AG04450 (cell line): ENCODE measurements at regions of chr15 and their contacts with region 1.

Region 1: GRCh38 chr15:65869127-65869953 is at the start of gene RAB11A:
- DNase-seq: peak; percentile 93
- H3K4me3 ChIP-seq: peak within 1 kb of the TSS; percentile 99
- H3K27ac ChIP-seq: peak within 1 kb of the TSS; percentile 83
- H3K27me3 ChIP-seq: no peaks in the 10 kb centered on the region
- CTCF ChIP-seq: peak; percentile 44
- polyA plus RNA-seq, gene RAB11A: 315 and 399 TPM in 2 replicates

Region 2: GRCh38 chr15:65610871-65611718 is 258.2 kb before region 1 on chr15 and contains the start of gene INTS14:
- CTCF ChIA-PET with region 1: interaction called, 5 read pairs
- POLR2A ChIA-PET with region 1: interaction called, 31 read pairs
- DNase-seq: peak; percentile 89
- H3K4me3 ChIP-seq: peak within 1 kb of the TSS; percentile 80
- H3K27ac ChIP-seq: peak within 1 kb of the TSS; percentile 95
- H3K27me3 ChIP-seq: no peaks in the 10 kb centered on the region
- CTCF ChIP-seq: peak; percentile 46; the same call in 1 of the 2 replicates
- polyA plus RNA-seq, gene INTS14: 46.1 and 56.6 TPM in 2 replicates

Region 3: GRCh38 chr15:65804252-65804931 is 64.9 kb before region 1 on chr15:
- CTCF ChIA-PET with region 1: no interaction called
- POLR2A ChIA-PET with region 1: no interaction called
- DNase-seq: no peak
- H3K4me3 ChIP-seq: no peak overlapping the region
- H3K27ac ChIP-seq: no peak overlapping the region
- H3K27me3 ChIP-seq: no peaks in the 10 kb centered on the region
- CTCF ChIP-seq: no peak

Region 4: GRCh38 chr15:65916664-65917406 is 47.5 kb after region 1 on chr15:
- CTCF ChIA-PET with region 1: no interaction called
- POLR2A ChIA-PET with region 1: no interaction called
- DNase-seq: peak; percentile 24
- H3K4me3 ChIP-seq: no peak overlapping the region
- H3K27ac ChIP-seq: peak overlapping the region; percentile 11
- H3K27me3 ChIP-seq: no peaks in the 10 kb centered on the region
- CTCF ChIP-seq: peak; percentile 75

Region 5: DNA sequence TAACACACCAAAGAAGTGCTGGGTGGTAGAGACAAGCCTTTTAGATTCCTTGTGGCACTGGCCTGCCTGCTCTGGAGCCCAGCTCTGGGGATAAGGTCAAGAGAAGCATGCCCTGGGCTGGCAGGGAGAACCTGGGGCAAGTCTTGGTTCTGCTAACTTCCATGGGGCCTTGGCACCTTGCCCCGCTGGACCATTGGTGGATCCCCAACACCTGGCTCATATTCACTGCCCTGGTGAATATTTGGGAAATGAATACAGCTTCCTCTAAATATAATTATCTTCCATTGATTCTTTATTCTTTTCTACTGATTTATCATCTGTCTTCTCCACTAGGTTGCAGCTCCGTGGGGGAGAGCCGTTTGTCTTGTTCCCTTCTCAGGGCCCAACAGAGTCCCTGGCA is 89.5 kb after region 1 on chr15:
- CTCF ChIA-PET with region 1: no interaction called
- POLR2A ChIA-PET with region 1: interaction called, 14 read pairs
- DNase-seq: no peak
- H3K4me3 ChIP-seq: no peak overlapping the region
- H3K27ac ChIP-seq: no peak overlapping the region
- H3K27me3 ChIP-seq: peaks cover 35% of the 10 kb centered on the region
- CTCF ChIP-seq: no peak